ENCODE measurements at regions of chr6 and their contacts with region 1.

Region 1: GRCh38 chr6:160041608-160042007 is 72.7 kb downstream of the IGF2R start:
- DNase-seq: no peak
- H3K4me3 ChIP-seq: no peak overlapping the region
- H3K27ac ChIP-seq: peak overlapping the region; percentile 60 to 61
- H3K4me1 ChIP-seq: peaks cover 0 to 39% (median 30%) of the 10 kb centered on the region in 4 donors
- H3K27me3 ChIP-seq: no peaks in the 10 kb centered on the region
- CTCF ChIP-seq: no peak

Region 2: GRCh38 chr6:159968440-159969203 is 73.0 kb before region 1 on chr6 and contains the start of gene IGF2R:
- intact Hi-C with region 1: loop called (anchors 5 kb)
- DNase-seq: peak; percentile 95 to 96
- H3K4me3 ChIP-seq: peak within 1 kb of the TSS; percentile 97 to 100
- H3K27ac ChIP-seq: peak within 1 kb of the TSS; percentile 89 to 91
- H3K4me1 ChIP-seq: peaks cover 0 to 37% (median 16%) of the 10 kb centered on the region in 4 donors
- H3K27me3 ChIP-seq: no peaks in the 10 kb centered on the region
- CTCF ChIP-seq: peak; percentile 17 to 35

Measured in tibial artery (tissue), 4 donors.